ENCODE measurements at regions of chr16 and their contacts with region 1.

Region 1: GRCh38 chr16:86519649-86520316 is 9.5 kb downstream of the FOXF1 start:
- DNase-seq: peak; percentile 53 to 77
- ATAC-seq: peak; percentile 26 to 70; a peak in 3 of 6 replicates
- H3K4me3 ChIP-seq: peak overlapping the region; percentile 21; the same call in 1 of the 3 replicates
- H3K27ac ChIP-seq: no peak overlapping the region
- H3K4me1 ChIP-seq: no peaks in the 10 kb centered on the region
- CTCF ChIP-seq: peak; percentile 94
- EP300 ChIP-seq: no peak
- POLR2A ChIP-seq: no peak
- RAD21 ChIP-seq: peak; percentile 82 to 85

Region 2: DNA sequence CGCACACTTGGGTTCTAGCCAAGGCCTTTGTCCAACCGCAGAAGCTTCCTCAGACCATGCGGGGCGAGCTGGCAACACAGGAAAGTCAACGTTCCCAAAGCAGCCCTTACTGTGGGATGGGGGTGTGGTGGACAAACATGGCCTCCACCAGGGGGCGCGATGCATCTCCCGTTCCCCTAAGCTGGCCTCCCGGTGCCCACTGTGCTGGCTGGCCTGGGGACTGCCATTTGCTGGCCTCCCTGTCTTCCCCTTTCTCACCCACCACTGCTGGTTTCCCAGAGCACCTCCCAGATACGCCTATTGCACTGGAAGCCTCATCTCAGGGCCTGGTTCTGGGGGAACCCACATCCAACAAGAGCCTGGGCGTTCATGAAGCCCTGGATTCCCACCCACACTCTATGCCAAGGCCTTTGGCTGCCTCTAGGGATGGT is 475.5 kb before region 1 on chr16:
- CTCF ChIA-PET with region 1: interaction called, 14 read pairs
- POLR2A ChIA-PET with region 1: no interaction called
- DNase-seq: peak; percentile 57 to 78
- ATAC-seq: peak in 1 of 2 experiments; percentile 93; a peak in 3 of 6 replicates
- H3K4me3 ChIP-seq: no peak overlapping the region
- H3K27ac ChIP-seq: no peak overlapping the region
- H3K4me1 ChIP-seq: no peaks in the 10 kb centered on the region
- CTCF ChIP-seq: peak; percentile 32; the same call in 2 of the 3 replicates
- EP300 ChIP-seq: no peak
- POLR2A ChIP-seq: no peak
- RAD21 ChIP-seq: peak in 1 of 2 experiments; percentile 44; a peak in 2 of 5 replicates

Region 3: DNA sequence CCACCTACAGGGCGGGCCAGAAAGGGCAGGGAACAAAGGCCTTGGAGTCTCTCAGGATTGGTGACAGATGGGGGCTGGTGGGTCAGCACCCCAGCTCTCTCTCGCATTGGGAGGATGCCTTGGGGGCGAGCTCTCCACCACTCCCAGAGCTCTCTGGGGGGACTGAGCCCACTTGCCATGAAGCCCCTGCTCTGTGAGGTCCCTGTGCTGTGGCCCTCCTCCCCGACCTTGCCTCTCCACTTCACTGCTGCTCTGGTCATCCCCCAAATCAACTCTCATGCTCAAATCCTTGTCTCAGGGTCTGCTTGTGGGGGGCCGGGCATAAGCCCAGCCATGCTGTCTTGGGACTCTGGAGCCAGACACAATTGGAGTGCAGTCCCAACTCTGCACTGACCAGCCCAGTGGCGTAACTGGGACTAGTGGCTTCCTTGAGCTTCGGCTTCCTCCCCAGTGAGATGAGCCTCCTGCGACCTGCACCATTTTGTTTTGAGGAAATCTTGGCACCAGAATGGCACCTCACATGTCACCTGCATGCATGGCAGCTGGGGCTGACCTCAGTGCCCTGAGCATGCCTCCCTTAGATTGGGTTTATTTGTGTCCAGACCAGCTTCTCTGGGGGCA is 436.3 kb before region 1 on chr16:
- CTCF ChIA-PET with region 1: interaction called, 321 read pairs
- POLR2A ChIA-PET with region 1: no interaction called
- DNase-seq: no peak
- ATAC-seq: peak in 1 of 2 experiments; percentile 55; a peak in 3 of 6 replicates
- H3K4me3 ChIP-seq: no peak overlapping the region
- H3K27ac ChIP-seq: no peak overlapping the region
- H3K4me1 ChIP-seq: no peaks in the 10 kb centered on the region
- CTCF ChIP-seq: no peak
- EP300 ChIP-seq: no peak
- POLR2A ChIP-seq: no peak
- RAD21 ChIP-seq: no peak

Region 4: DNA sequence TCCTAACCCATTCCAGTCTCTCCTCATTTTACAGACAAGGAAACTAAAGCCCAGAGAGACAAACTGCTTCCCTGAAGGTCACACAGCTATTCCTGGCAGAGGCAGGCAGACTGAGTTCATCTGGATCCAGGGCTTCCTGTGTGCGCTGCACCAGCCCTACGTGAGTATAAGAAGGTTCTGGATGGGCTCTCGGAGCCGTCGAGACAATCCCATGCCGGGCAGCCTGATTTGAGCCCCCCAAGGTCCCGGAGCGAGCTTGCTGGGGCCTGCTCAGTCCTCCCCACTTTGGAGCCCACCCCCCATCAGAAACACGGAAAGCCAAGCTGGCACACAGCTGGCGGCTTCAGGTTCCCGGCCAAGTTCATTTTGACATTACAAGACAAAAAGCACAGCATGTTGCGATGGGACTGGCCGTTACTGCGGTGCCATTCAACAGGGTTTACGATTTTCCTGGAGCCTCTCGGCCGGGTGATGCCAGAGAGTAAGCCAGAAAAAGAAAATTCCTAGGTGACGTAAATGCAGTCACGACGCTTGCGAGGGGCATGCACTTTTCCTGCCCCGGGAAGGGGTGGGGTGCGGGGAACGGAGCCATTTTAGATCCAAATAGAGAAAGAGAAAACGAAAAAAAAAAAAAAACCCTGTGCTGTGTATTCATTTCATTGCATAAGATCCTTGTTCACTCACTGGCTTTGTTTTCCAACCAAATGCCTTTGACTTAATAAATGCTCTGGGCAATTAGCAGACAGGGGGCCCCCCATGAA is 176.6 kb before region 1 on chr16:
- CTCF ChIA-PET with region 1: interaction called, 30 read pairs
- POLR2A ChIA-PET with region 1: no interaction called
- DNase-seq: no peak
- ATAC-seq: no peak
- H3K4me3 ChIP-seq: no peak overlapping the region
- H3K27ac ChIP-seq: no peak overlapping the region
- H3K4me1 ChIP-seq: no peaks in the 10 kb centered on the region
- CTCF ChIP-seq: no peak
- EP300 ChIP-seq: no peak
- POLR2A ChIP-seq: no peak
- RAD21 ChIP-seq: no peak

Region 5: DNA sequence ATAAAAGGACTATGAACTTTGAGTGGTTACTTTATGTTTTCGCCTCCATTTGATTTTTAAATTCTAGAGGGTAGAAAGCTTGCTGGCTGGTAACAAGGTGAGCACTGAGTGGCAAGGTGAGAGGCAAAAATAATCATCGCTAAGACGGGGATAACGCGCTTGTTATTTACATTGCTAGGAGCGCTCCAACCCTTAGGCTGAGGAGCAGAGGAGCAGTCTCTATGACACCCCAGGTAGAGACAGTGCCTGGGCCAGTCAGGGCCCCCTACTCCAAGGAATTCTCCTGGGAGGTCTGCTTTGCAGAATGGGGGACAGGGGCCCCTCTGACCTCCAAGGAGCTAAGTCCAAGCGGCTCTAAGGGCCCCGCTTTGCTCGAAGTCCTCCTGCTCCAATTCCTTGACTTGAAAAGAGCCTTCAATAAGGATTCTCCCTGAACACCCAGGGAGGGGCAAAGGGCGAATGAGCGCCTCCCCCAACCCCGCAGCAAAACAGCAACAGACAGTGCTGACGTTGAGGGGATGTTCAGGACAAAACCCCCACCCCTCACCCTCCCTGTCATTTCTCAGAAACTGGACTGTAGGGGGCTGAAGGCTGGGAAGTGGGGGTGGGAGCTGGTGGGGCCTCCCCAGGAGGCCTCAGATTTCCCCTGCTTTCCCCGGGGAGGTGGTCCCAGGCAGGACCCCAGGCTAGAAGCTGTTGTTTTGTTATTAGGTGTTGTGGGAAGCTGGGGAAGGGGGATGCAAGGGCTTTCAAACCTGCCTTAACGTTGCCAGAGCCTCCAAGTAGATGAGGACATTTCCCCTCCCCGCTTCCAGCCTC is 19.7 kb before region 1 on chr16:
- CTCF ChIA-PET with region 1: interaction called, 18 read pairs
- POLR2A ChIA-PET with region 1: no interaction called
- DNase-seq: no peak
- ATAC-seq: no peak
- H3K4me3 ChIP-seq: no peak overlapping the region
- H3K27ac ChIP-seq: no peak overlapping the region
- H3K4me1 ChIP-seq: no peaks in the 10 kb centered on the region
- CTCF ChIP-seq: no peak
- EP300 ChIP-seq: no peak
- POLR2A ChIP-seq: no peak
- RAD21 ChIP-seq: no peak

Measured in A549 (cell line).